Tibial artery (tissue), 4 donors: ENCODE measurements at regions of chr2 and their contacts with region 1.

Region 1: DNA sequence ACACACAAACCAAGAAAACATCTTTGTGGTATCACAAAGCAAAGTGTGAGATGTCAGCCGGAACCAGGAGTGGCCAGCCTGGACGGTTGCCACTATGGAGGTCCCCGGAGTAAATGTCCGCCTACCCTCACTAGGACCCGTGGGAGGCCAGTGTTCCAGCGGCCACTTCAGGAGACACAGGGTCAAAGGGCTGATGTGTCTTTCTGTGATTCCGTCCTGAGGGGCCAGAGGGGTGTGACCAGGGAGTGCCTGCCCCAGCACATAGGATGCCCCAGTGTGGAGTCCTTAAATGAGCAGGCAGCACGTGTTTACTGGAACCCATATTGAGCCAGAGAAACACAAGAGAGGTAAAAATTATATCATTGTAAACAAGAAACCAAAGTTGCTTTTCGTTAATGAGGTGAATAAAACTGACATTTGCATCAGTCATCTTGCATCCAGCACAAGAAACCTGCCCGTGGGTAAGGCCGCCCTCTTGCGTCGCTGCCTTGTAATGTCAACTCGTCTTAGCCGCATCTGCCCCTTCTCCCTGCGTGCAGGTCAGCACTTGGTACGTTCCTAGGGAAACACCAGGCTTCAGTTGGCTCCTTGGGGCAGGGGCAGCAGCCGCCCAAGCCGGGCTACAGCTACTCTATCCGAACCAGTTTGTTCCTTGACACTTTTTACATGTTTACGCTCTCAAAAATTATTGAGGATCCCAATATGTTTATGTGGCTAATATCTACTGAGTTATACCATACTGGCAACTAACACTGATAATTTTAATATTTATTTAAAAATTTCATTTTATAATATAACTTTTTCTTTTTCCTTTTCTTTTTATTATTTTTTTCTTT is 46.7 kb upstream of the LAPTM4A start:
- DNase-seq: peak; percentile 75 to 88
- H3K4me3 ChIP-seq: no peak overlapping the region
- H3K27ac ChIP-seq: no peak overlapping the region
- H3K4me1 ChIP-seq: peaks cover 0 to 3% (median 0%) of the 10 kb centered on the region in 4 donors
- H3K27me3 ChIP-seq: peaks cover 0 to 6% of the 10 kb centered on the region in 2 donors
- CTCF ChIP-seq: peak; percentile 84 to 89

Region 2: DNA sequence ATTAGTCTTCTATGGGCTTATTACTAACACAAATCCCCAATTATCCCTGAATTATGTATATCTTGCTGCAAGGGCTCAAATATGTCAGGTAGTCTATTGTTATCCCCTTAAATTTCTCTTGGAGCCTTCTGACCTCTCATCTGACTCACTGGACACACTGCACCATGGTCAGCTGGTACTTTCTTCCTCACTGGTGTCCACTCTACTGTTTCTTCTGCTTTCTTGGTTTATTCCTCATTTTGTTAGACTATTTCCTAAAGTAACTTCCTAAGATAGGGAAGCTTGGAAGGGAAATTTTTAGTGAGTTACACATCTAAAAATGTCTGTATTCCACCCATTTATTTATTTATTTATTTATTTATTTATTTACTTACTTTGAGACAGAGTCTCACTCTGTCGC is 134.7 kb before region 1 on chr2:
- intact Hi-C with region 1: loop called (anchors 5 kb)
- DNase-seq: no peak
- H3K4me3 ChIP-seq: no peak overlapping the region
- H3K27ac ChIP-seq: no peak overlapping the region
- H3K4me1 ChIP-seq: no peaks in the 10 kb centered on the region
- H3K27me3 ChIP-seq: no peaks in the 10 kb centered on the region
- CTCF ChIP-seq: no peak

Region 3: GRCh38 chr2:20012299-20013125 is 85.6 kb before region 1 on chr2 and contains the start of gene MATN3:
- intact Hi-C with region 1: loop called (anchors 2 kb)
- DNase-seq: no peak
- H3K4me3 ChIP-seq: peak within 1 kb of the TSS; percentile 56 to 68
- H3K27ac ChIP-seq: peak within 1 kb of the TSS; percentile 67 to 77
- H3K4me1 ChIP-seq: peaks cover 0 to 14% (median 12%) of the 10 kb centered on the region in 4 donors
- H3K27me3 ChIP-seq: no peaks in the 10 kb centered on the region
- CTCF ChIP-seq: no peak